Activated CD4-positive, alpha-beta T cell treated with anti-CD3 and anti-CD28 coated beads for 36 hours (primary cell): ENCODE measurements at regions of chr6 and their contacts with region 1.

Region 1: GRCh38 chr6:138115877-138116660 is 8.8 kb upstream of the PERP start:
- DNase-seq: peak; percentile 68
- ATAC-seq: peak; percentile 94
- H3K4me3 Mint-ChIP-seq: no peak overlapping the region
- H3K27ac Mint-ChIP-seq: no peak overlapping the region
- H3K4me1 Mint-ChIP-seq: peaks cover 6% of the 10 kb centered on the region
- H3K27me3 Mint-ChIP-seq: peaks cover 30% of the 10 kb centered on the region

Region 2: DNA sequence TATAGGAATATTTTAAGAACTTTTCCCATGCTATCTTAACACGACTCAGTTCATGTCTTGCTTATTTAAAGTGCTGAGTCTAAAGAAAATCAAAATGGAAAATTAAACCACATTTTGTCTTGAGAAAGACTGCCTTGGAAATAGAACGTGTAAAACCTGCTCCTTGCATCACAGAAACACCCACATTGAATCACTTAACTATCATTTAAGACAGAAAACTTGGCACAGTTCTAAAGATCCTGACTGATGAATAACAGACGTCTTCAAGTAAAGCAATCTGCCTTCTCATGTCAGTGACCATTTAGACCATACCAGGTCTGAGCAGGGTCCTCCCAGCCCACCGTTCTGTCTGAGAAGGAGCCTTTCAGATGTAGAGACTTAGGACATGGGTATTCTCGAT is 16.2 kb before region 1 on chr6:
- CTCF ChIA-PET with region 1: interaction called, 24 read pairs
- POLR2A ChIA-PET with region 1: no interaction called
- intact Hi-C with region 1: no loop called
- DNase-seq: no peak
- ATAC-seq: no peak
- H3K4me3 Mint-ChIP-seq: no peak overlapping the region
- H3K27ac Mint-ChIP-seq: no peak overlapping the region
- H3K4me1 Mint-ChIP-seq: no peaks in the 10 kb centered on the region
- H3K27me3 Mint-ChIP-seq: peaks cover 19% of the 10 kb centered on the region

Region 3: GRCh38 chr6:138287144-138287955 is 171.3 kb after region 1 on chr6:
- CTCF ChIA-PET with region 1: interaction called, 43 read pairs
- POLR2A ChIA-PET with region 1: no interaction called
- intact Hi-C with region 1: loop called (anchors 1 kb)
- DNase-seq: peak; percentile 70
- ATAC-seq: peak; percentile 63
- H3K4me3 Mint-ChIP-seq: no peak overlapping the region
- H3K27ac Mint-ChIP-seq: no peak overlapping the region
- H3K4me1 Mint-ChIP-seq: peaks cover 3% of the 10 kb centered on the region
- H3K27me3 Mint-ChIP-seq: peaks cover 1% of the 10 kb centered on the region

Region 4: DNA sequence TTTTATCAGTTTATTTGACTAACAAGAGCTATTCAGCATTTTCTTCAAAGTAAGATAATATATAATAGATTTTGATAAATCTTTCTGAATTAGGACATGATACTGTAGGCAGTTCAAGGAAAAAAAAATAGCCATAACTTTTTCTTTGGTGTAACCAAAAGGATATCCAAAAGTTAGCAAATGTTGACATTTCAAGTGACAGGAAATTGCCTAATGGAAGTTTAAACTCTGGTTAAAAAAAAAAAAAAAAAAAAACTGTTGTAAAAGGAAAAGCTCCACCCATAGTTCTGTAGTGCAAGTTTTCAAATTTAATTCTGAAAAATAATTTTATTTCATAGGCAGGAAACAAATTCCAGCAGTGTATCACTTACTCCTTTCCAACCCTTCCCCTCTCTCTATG is 306.8 kb after region 1 on chr6:
- CTCF ChIA-PET with region 1: interaction called, 4 read pairs
- POLR2A ChIA-PET with region 1: no interaction called
- intact Hi-C with region 1: loop called in 1 of 2 experiments (anchors 5 kb)
- DNase-seq: no peak
- ATAC-seq: no peak
- H3K4me3 Mint-ChIP-seq: no peak overlapping the region
- H3K27ac Mint-ChIP-seq: no peak overlapping the region
- H3K4me1 Mint-ChIP-seq: peaks cover 11% of the 10 kb centered on the region
- H3K27me3 Mint-ChIP-seq: no peaks in the 10 kb centered on the region

Region 5: GRCh38 chr6:138509371-138509770 is 393.3 kb after region 1 on chr6:
- CTCF ChIA-PET with region 1: interaction called, 29 read pairs
- POLR2A ChIA-PET with region 1: no interaction called
- intact Hi-C with region 1: loop called (anchors 1 to 2 kb)
- DNase-seq: peak; percentile 66
- ATAC-seq: peak; percentile 60
- H3K4me3 Mint-ChIP-seq: no peak overlapping the region
- H3K27ac Mint-ChIP-seq: no peak overlapping the region
- H3K4me1 Mint-ChIP-seq: peaks cover 2% of the 10 kb centered on the region
- H3K27me3 Mint-ChIP-seq: no peaks in the 10 kb centered on the region

Region 6: DNA sequence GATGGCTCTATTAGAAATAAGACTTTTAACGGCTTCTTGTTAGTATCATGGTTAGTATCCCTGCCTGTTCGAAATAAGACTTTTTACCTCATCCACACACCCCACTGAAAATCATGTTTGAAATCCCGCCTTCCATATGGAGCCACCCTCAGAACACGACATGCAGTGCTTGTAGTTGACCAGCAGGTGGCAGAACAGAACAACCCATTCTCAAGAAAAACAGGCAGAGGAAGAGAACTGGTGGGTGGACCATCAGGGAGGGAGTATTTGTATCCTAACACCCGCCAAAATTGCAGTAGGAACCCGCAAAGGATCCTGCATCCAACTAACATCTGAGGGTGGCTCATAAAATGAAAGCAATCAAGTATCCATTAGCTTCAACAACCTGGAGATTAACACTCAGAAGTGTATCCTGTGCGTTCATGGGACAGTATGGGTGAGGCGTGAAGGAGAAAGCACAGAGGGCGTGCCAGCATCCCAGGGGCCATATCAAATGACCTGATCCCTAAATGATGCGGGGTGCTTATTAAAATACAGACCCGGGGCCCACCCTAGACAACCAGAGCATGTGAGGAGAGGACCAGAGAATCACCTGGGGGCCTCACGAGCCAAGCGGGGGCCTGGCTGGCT is 472.9 kb after region 1 on chr6:
- CTCF ChIA-PET with region 1: interaction called, 3 read pairs
- POLR2A ChIA-PET with region 1: no interaction called
- intact Hi-C with region 1: loop called in 1 of 2 experiments (anchors 2 kb)
- DNase-seq: peak; percentile 67
- ATAC-seq: peak; percentile 11
- H3K4me3 Mint-ChIP-seq: no peak overlapping the region
- H3K27ac Mint-ChIP-seq: no peak overlapping the region
- H3K4me1 Mint-ChIP-seq: peaks cover 28% of the 10 kb centered on the region
- H3K27me3 Mint-ChIP-seq: no peaks in the 10 kb centered on the region